Naive thymus-derived CD4-positive, alpha-beta T cell (primary cell): ENCODE measurements at regions of chr18 and their contacts with region 1.

Region 1: GRCh38 chr18:29418136-29418535 is 1241.2 kb upstream of the CDH2 start:
- DNase-seq: no peak
- ATAC-seq: no peak
- H3K4me3 ChIP-seq: no peak overlapping the region
- H3K4me3 Mint-ChIP-seq: no peak overlapping the region
- H3K27ac ChIP-seq: no peak overlapping the region
- H3K27ac Mint-ChIP-seq: no peak overlapping the region
- H3K4me1 ChIP-seq: no peaks in the 10 kb centered on the region
- H3K4me1 Mint-ChIP-seq: no peaks in the 10 kb centered on the region
- H3K27me3 ChIP-seq: no peaks in the 10 kb centered on the region
- H3K27me3 Mint-ChIP-seq: no peaks in the 10 kb centered on the region

Region 2: DNA sequence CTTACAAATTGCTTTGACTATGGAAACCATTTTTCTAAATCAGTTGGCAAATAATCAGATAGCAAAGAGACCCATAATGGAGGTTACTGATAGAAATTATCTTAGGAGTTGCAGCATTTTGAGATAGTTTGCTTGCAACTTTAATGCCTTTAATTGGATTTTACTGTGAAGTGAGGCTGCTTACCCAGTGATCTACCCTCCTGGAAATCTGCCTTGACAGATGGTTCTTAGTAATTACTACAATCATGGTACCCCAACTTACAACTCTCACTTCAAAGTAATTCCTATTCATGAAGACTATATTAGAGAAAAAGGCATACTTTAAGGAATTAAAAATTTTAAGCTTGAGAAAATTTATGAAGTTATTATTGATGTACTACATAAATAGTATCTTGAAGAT is 47.4 kb after region 1 on chr18:
- CTCF ChIA-PET with region 1: no interaction called
- POLR2A ChIA-PET with region 1: no interaction called
- intact Hi-C with region 1: loop called in 1 of 2 experiments (anchors 10 kb)
- DNase-seq: no peak
- ATAC-seq: no peak
- H3K4me3 ChIP-seq: no peak overlapping the region
- H3K4me3 Mint-ChIP-seq: no peak overlapping the region
- H3K27ac ChIP-seq: no peak overlapping the region
- H3K27ac Mint-ChIP-seq: no peak overlapping the region
- H3K4me1 ChIP-seq: no peaks in the 10 kb centered on the region
- H3K4me1 Mint-ChIP-seq: no peaks in the 10 kb centered on the region
- H3K27me3 ChIP-seq: no peaks in the 10 kb centered on the region
- H3K27me3 Mint-ChIP-seq: no peaks in the 10 kb centered on the region